Esophagus muscularis mucosa (tissue), 4 donors: ENCODE measurements at regions of chr7 and their contacts with region 1.

Region 1: DNA sequence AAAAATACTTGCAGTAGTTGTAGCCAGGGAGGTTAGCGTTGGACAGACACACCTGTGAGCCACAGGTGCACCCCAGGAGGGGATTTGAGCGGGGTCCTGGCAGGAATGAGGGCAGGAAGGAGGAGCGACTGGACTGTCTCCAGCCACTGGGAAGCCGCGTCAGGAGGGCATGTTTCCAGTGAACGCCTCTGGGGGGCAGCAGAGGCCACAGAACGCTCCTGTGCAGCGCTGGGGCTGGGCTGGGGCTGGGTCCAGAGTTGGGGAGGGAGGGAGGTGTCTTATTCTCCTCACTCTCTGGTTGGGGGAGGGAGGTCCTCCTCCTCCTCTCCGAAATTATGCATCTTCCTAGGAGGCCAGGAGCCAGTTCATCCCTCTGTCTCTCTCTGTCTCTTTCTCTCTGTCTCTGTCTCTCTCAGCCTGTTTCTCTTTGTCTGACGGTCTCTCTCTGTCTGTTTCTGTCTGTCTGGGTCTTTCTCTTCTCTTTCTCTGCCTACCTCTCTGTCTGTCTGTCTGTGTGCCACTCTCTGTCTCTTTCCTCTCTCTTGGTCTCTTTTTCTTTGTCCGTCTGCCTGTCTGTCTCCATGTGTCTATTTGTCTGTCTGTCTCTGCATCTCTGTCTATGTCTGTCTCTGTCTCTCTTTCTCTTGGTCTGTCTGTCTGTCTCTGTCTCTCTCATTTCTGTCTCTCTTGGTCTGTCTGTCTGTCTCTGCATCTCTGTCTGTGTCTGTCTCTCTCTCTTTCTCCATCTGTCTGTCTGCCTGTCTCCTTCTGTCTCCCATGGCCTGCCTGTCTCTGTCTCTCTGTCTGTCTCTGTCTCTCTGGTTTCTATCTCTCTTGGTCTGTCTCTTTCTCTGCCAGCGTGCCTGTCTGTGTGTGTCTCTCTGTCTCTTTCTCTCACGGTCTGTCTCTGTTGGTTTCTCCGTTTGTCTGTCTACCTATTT is 9.9 kb upstream of the PSMG3 start:
- DNase-seq: no peak
- H3K4me3 ChIP-seq: no peak overlapping the region
- H3K27ac ChIP-seq: no peak overlapping the region
- H3K4me1 ChIP-seq: peaks cover 0 to 8% (median 8%) of the 10 kb centered on the region in 4 donors
- H3K27me3 ChIP-seq: no peaks in the 10 kb centered on the region
- CTCF ChIP-seq: peak; percentile 63 to 87 (median 70)
- EP300 ChIP-seq: no peak
- POLR2A ChIP-seq: no peak

Region 2: GRCh38 chr7:1532483-1533424 is 47.0 kb before region 1 on chr7:
- intact Hi-C with region 1: no loop called
- DNase-seq: peak; percentile 97
- H3K4me3 ChIP-seq: peak overlapping the region; percentile 60 to 96 (median 78)
- H3K27ac ChIP-seq: peak overlapping the region; percentile 97 to 99 (median 97)
- H3K4me1 ChIP-seq: peaks cover 41 to 71% (median 64%) of the 10 kb centered on the region in 4 donors
- H3K27me3 ChIP-seq: peaks cover 0 to 13% (median 0%) of the 10 kb centered on the region in 4 donors
- CTCF ChIP-seq: no peak
- EP300 ChIP-seq: no peak
- POLR2A ChIP-seq: peak; percentile 21

Region 3: GRCh38 chr7:1611708-1612241 is 32.0 kb after region 1 on chr7:
- intact Hi-C with region 1: no loop called
- DNase-seq: no peak
- H3K4me3 ChIP-seq: no peak overlapping the region
- H3K27ac ChIP-seq: no peak overlapping the region
- H3K4me1 ChIP-seq: no peaks in the 10 kb centered on the region
- H3K27me3 ChIP-seq: peaks cover 0 to 38% (median 2%) of the 10 kb centered on the region in 4 donors
- CTCF ChIP-seq: no peak
- EP300 ChIP-seq: no peak
- POLR2A ChIP-seq: no peak

Region 4: GRCh38 chr7:1693991-1694524 is 114.3 kb after region 1 on chr7:
- intact Hi-C with region 1: no loop called
- DNase-seq: no peak
- H3K4me3 ChIP-seq: no peak overlapping the region
- H3K27ac ChIP-seq: no peak overlapping the region
- H3K4me1 ChIP-seq: peaks cover 3 to 18% (median 12%) of the 10 kb centered on the region in 4 donors
- H3K27me3 ChIP-seq: peaks cover 0 to 53% (median 0%) of the 10 kb centered on the region in 4 donors
- CTCF ChIP-seq: no peak
- EP300 ChIP-seq: no peak
- POLR2A ChIP-seq: no peak

Region 5: DNA sequence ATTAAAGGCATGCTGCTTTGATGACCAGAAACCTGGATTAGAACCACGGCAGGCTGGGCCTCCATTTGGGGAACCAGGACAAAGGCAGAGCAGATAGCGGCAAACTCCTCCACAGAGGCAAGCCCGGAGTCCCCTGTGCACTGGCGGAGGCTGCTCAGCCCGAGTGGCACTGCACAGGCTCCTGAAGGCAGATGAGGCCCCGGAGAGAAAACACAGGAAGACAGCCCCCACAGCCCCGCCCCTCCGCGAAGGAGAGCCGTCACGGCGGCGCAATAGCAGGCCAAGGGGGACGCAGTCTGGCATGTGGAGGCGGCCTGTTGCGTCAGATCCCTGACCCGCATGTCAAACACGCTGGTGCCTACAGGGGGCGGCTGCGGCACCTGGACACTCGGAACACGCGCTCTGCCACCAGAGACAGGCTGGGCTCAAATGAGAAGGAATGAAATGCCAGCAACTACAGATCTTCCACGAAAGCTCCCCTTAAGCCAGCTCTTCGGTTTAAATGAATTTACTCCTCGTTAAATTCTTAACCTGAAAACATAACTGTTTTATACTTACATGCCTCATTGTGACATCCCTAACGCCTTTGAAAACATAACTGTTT is 524.5 kb after region 1 on chr7:
- intact Hi-C with region 1: loop called (anchors 10 kb)
- DNase-seq: peak; percentile 96
- H3K4me3 ChIP-seq: peak overlapping the region; percentile 25 to 41 (median 34)
- H3K27ac ChIP-seq: peak overlapping the region; percentile 60 to 76 (median 62)
- H3K4me1 ChIP-seq: peaks cover 33 to 65% (median 50%) of the 10 kb centered on the region in 4 donors
- H3K27me3 ChIP-seq: no peaks in the 10 kb centered on the region
- CTCF ChIP-seq: peak; percentile 59 to 82 (median 78)
- EP300 ChIP-seq: no peak
- POLR2A ChIP-seq: no peak

Region 6: GRCh38 chr7:2214636-2215035 is 634.9 kb after region 1 on chr7:
- intact Hi-C with region 1: loop called (anchors 5 kb)
- DNase-seq: no peak
- H3K4me3 ChIP-seq: no peak overlapping the region
- H3K27ac ChIP-seq: no peak overlapping the region
- H3K4me1 ChIP-seq: peaks cover 1 to 5% (median 2%) of the 10 kb centered on the region in 4 donors
- H3K27me3 ChIP-seq: no peaks in the 10 kb centered on the region
- CTCF ChIP-seq: no peak
- EP300 ChIP-seq: no peak
- POLR2A ChIP-seq: no peak

Region 7: GRCh38 chr7:2471396-2471795 is 891.6 kb after region 1 on chr7:
- intact Hi-C with region 1: loop called (anchors 5 kb)
- DNase-seq: no peak
- H3K4me3 ChIP-seq: no peak overlapping the region
- H3K27ac ChIP-seq: peak overlapping the region in 2 of 4 donors; percentile 28 to 54
- H3K4me1 ChIP-seq: peaks cover 12 to 18% (median 18%) of the 10 kb centered on the region in 4 donors
- H3K27me3 ChIP-seq: peaks cover 0 to 57% (median 4%) of the 10 kb centered on the region in 4 donors
- CTCF ChIP-seq: no peak
- EP300 ChIP-seq: no peak
- POLR2A ChIP-seq: no peak